ENCODE measurements at regions of chr16 and their contacts with region 1.

Region 1: DNA sequence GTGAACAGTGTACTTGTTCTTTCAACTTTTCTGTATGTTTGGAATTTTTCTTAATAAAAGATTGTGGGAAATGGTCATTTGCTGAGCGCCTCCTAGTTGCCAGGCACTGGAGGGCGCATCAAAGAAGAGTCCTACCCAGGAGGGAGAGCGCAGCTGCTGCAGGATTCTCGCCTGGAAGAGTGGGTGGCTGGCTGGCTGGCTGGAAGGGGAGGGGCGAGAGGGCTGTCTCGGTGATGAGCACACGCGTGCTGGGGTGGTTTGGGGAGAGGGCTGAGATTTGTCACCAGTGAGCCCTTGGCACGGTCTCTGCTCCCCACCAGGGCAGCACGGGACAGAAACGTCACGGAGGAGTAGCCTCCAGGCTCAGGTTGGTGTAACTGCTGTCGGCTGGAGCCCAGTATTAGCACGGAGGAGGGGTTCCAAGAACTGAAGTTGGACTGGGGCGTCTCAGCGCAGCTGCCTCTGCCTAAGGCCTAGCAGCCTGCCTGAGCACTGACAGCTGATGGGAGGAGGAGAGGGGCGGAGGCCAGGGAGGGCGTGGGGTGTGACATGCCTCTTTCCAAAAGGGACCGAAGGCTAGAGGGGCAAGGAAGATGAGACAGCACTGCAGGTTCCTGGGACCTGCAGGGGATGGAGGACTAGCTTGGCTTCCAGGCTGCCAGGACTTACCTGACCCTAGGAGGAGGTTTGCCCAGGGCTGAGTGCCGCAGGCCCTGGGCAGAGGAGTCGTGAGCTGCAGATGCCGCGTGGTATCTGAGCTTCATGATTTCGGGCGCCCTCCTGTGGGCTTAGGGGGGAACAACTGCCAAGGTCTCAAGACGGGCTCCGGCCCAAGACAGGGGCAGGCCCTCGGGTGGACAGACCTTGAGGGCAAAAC is 5.7 kb downstream of the LDHD start:
- DNase-seq: peak; percentile 73
- ATAC-seq: peak; percentile 90
- H3K4me3 Mint-ChIP-seq: peak overlapping the region; percentile 54
- H3K27ac Mint-ChIP-seq: peak overlapping the region; percentile 30
- H3K4me1 Mint-ChIP-seq: peaks cover 41% of the 10 kb centered on the region
- H3K27me3 Mint-ChIP-seq: peaks cover 57% of the 10 kb centered on the region
- CTCF ChIP-seq: no peak

Region 2: GRCh38 chr16:74466872-74467271 is 644.0 kb before region 1 on chr16:
- CTCF ChIA-PET with region 1: no interaction called
- POLR2A ChIA-PET with region 1: no interaction called
- intact Hi-C with region 1: no loop called
- DNase-seq: no peak
- ATAC-seq: no peak
- H3K4me3 Mint-ChIP-seq: no peak overlapping the region
- H3K27ac Mint-ChIP-seq: no peak overlapping the region
- H3K4me1 Mint-ChIP-seq: peaks cover 17% of the 10 kb centered on the region
- H3K27me3 Mint-ChIP-seq: no peaks in the 10 kb centered on the region
- CTCF ChIP-seq: no peak

Region 3: DNA sequence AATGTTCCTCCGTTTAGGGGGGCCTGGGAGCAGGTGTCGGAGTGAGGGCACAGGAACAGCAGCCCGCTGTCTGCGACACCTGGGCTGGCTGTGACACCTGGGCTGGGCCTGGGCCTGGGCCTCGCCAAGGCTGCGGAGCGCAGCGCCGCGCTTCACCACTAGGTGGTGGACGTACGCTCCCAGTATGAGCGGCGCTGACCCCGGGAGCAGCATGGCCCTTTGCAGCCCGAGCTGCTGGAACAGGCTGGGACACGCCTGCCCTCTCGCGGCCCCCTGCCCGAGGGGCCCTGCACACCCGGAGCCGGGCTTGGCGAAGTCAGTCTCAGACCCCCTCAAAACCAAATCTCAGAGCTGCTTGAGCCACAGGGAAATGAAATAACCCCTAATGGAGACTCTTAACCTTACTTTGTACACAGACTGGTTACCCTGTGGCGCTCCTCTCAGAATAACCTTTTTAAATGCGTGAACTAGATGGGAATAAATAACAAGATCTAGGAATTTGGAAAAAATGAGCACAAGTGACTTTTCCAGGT is 297.7 kb before region 1 on chr16:
- CTCF ChIA-PET with region 1: interaction called, 4 read pairs
- POLR2A ChIA-PET with region 1: no interaction called
- intact Hi-C with region 1: loop called (anchors 1 kb)
- DNase-seq: peak; percentile 59
- ATAC-seq: peak; percentile 96
- H3K4me3 Mint-ChIP-seq: no peak overlapping the region
- H3K27ac Mint-ChIP-seq: no peak overlapping the region
- H3K4me1 Mint-ChIP-seq: no peaks in the 10 kb centered on the region
- H3K27me3 Mint-ChIP-seq: peaks cover 13% of the 10 kb centered on the region
- CTCF ChIP-seq: peak; percentile 78

Region 4: GRCh38 chr16:74874912-74875546 is 235.8 kb before region 1 on chr16:
- CTCF ChIA-PET with region 1: no interaction called
- POLR2A ChIA-PET with region 1: no interaction called
- intact Hi-C with region 1: loop called (anchors 5 kb)
- DNase-seq: no peak
- ATAC-seq: no peak
- H3K4me3 Mint-ChIP-seq: no peak overlapping the region
- H3K27ac Mint-ChIP-seq: no peak overlapping the region
- H3K4me1 Mint-ChIP-seq: no peaks in the 10 kb centered on the region
- H3K27me3 Mint-ChIP-seq: no peaks in the 10 kb centered on the region
- CTCF ChIP-seq: no peak

Region 5: DNA sequence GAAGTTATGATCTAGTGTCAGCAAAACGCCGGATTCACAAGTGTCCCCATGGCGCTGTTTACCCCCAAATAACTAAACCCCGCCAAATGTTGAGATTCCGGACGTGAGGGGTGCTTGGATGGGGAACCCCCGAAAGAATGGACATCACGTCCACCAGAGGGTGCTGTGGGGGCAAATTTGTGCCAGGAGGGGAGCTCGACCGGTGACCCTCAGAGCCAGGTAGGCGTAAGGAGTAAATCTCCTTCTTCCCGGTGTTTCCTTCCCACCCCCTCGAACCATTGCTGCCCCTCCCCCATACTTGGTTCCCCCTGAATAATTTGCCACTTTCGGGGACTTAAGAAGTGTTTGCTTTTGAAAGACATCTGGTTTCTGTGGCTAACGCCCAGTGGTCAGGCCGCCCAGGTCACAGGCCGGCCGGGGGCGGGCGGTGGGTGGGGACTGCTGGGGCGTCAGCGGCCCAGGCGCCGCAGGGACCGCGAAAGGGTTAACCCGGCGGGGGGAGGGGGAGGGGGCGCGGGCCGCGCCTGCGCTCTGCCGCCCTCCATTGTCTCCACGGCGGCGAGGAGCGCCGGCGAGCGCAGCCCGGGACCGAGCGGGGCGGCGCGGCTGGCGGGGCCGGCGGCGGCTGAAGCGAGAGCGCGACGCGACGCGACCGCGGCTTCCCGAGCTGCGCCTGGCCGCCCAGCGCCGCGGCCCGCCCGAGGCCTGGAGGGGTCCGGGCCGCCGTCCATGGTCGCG is 112.2 kb before region 1 on chr16 and contains the start of gene ZNRF1:
- CTCF ChIA-PET with region 1: interaction called, 81 read pairs
- POLR2A ChIA-PET with region 1: interaction called, 25 read pairs
- intact Hi-C with region 1: loop called (anchors 1 kb)
- DNase-seq: peak; percentile 58
- ATAC-seq: peak; percentile 84
- H3K4me3 Mint-ChIP-seq: peak within 1 kb of the TSS; percentile 85
- H3K27ac Mint-ChIP-seq: peak within 1 kb of the TSS; percentile 59
- H3K4me1 Mint-ChIP-seq: peaks cover 18% of the 10 kb centered on the region
- H3K27me3 Mint-ChIP-seq: peaks cover 39% of the 10 kb centered on the region
- CTCF ChIP-seq: peak; percentile 22
- total RNA-seq, gene ZNRF1: 1.6 and 2.8 TPM in 2 replicates

Region 6: DNA sequence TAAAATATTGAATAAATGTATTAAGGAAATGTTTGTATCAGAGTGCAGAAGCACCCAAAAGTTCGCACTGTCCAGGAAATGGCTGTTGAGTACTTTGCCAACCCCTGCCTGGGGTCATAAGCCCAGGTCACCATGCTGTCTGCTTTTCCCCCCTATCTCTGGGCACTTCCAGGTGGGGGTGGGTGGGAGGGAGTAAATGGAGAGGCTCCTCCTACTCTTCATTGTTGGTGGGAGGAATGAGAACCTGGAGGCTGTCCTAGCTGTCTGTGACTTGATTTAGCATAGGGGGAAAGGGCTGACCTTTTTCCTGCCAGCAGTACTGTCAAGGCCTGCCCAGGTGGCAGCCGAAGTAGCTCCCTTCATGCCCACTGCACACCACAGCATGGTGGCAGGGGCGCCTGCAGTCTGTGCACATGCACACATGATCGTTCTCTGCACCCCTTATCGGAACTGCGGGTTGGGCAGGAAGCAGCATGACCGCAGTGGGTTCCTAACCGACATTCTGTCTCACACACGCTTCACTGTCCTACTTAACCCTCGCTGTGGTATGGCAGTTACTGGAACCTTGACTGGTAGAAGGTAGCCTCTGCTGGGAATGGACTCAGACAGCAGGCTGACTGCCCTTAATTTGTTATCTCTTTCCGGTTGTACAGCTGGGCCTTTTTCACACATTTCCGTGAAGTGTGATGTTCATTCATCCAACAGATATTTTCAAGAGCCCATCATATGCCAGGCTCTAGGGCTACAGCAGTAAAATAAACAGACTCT is 35.8 kb before region 1 on chr16:
- CTCF ChIA-PET with region 1: interaction called, 5 read pairs
- POLR2A ChIA-PET with region 1: interaction called, 5 read pairs
- intact Hi-C with region 1: loop called (anchors 1 kb)
- DNase-seq: peak; percentile 37
- ATAC-seq: peak; percentile 95
- H3K4me3 Mint-ChIP-seq: peak overlapping the region; percentile 0
- H3K27ac Mint-ChIP-seq: peak overlapping the region; percentile 36
- H3K4me1 Mint-ChIP-seq: peaks cover 36% of the 10 kb centered on the region
- H3K27me3 Mint-ChIP-seq: peaks cover 24% of the 10 kb centered on the region
- CTCF ChIP-seq: no peak

Region 7: GRCh38 chr16:75169899-75170405 is 59.1 kb after region 1 on chr16:
- CTCF ChIA-PET with region 1: no interaction called
- POLR2A ChIA-PET with region 1: no interaction called
- intact Hi-C with region 1: no loop called
- DNase-seq: no peak
- ATAC-seq: no peak
- H3K4me3 Mint-ChIP-seq: no peak overlapping the region
- H3K27ac Mint-ChIP-seq: no peak overlapping the region
- H3K4me1 Mint-ChIP-seq: no peaks in the 10 kb centered on the region
- H3K27me3 Mint-ChIP-seq: no peaks in the 10 kb centered on the region
- CTCF ChIP-seq: no peak

Measured in activated B cell treated with CpG ODN at 0.5 μM for 24 hours (primary cell).